Sigmoid colon (tissue), 7 donors: ENCODE measurements at regions of chr2 and their contacts with region 1.

Region 1: GRCh38 chr2:121530212-121530705 is 421 bp upstream of the RNU4ATAC start:
- DNase-seq: peak; percentile 90
- H3K4me3 ChIP-seq: peak overlapping the region; percentile 59 to 82 (median 73)
- H3K27ac ChIP-seq: peak overlapping the region; percentile 87 to 96 (median 94)
- H3K4me1 ChIP-seq: peaks cover 0 to 50% (median 33%) of the 10 kb centered on the region in 4 donors
- H3K27me3 ChIP-seq: no peaks in the 10 kb centered on the region
- CTCF ChIP-seq: no peak
- EP300 ChIP-seq: no peak
- POLR2A ChIP-seq: no peak

Region 2: GRCh38 chr2:121400201-121400600 is 130.1 kb before region 1 on chr2:
- intact Hi-C with region 1: loop called (anchors 10 kb)
- DNase-seq: no peak
- H3K4me3 ChIP-seq: no peak overlapping the region
- H3K27ac ChIP-seq: no peak overlapping the region
- H3K4me1 ChIP-seq: no peaks in the 10 kb centered on the region
- H3K27me3 ChIP-seq: no peaks in the 10 kb centered on the region
- CTCF ChIP-seq: no peak
- EP300 ChIP-seq: no peak
- POLR2A ChIP-seq: no peak

Region 3: GRCh38 chr2:121555008-121555407 is 24.7 kb after region 1 on chr2:
- intact Hi-C with region 1: no loop called
- DNase-seq: no peak
- H3K4me3 ChIP-seq: no peak overlapping the region
- H3K27ac ChIP-seq: no peak overlapping the region
- H3K4me1 ChIP-seq: peaks cover 0 to 9% (median 3%) of the 10 kb centered on the region in 4 donors
- H3K27me3 ChIP-seq: no peaks in the 10 kb centered on the region
- CTCF ChIP-seq: no peak
- EP300 ChIP-seq: no peak
- POLR2A ChIP-seq: no peak

Region 4: DNA sequence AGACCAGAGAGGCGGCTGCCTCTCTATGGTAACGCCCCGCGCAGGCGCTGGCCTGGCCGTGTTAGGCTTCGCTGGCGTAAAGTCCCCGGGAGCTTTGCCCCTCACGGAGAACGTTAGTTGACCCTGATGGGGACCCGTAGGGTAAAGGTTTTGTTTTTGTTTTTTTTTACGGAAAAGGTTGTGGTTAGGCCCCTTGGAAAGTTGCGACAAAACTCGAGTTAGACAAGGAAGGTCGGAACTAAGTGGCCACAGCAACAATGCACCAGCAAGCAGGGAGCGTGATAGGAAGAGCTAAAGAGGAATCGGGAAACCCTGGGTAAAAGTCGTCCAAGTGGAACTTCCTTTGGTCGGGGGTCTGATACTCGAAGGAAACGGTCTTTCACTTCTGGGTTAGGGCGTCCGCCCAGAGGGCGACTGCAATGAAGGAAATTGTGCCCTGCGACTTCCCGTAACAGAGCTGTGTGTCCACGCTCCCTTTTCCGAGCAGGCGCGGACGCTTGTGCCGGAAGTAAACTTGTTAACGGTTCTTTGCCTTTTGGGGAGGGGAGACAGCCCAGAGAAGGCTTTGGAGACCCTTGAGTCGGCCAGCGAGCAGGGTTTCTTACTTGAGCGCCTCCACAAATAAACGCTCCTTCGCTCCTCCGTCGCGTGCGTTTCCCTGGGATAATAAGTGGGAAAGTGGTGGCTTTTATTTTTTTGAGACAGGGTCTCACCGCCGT is 119.5 kb after region 1 on chr2:
- intact Hi-C with region 1: loop called (anchors 1 kb)
- DNase-seq: peak; percentile 99
- H3K4me3 ChIP-seq: peak overlapping the region; percentile 77 to 94 (median 85)
- H3K27ac ChIP-seq: peak overlapping the region; percentile 93 to 98 (median 96)
- H3K4me1 ChIP-seq: peaks cover 0 to 46% (median 30%) of the 10 kb centered on the region in 4 donors
- H3K27me3 ChIP-seq: no peaks in the 10 kb centered on the region
- CTCF ChIP-seq: no peak
- EP300 ChIP-seq: peak in 1 of 4 donors; percentile 48
- POLR2A ChIP-seq: peak in 1 of 2 donors; percentile 4

Region 5: DNA sequence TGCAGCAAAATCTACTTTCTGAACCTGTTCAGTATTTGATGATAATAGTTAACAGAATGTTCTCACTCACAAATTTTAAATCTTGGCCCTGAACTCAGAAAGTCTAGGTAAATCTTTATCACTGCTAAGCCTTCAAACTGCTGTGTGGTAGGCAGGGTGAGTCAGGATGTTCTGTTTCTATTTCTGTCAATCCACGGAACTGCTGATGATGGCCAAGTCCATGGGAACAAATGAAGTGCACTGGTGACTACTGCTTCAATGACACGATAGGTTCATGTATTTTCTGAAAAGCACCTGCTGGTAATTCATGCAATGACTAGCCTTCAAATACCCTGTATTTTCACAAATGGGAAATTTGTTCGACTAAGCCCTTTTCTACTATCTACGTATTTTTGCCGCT is 192.2 kb after region 1 on chr2:
- intact Hi-C with region 1: loop called (anchors 2 kb)
- DNase-seq: no peak
- H3K4me3 ChIP-seq: no peak overlapping the region
- H3K27ac ChIP-seq: no peak overlapping the region
- H3K4me1 ChIP-seq: no peaks in the 10 kb centered on the region
- H3K27me3 ChIP-seq: no peaks in the 10 kb centered on the region
- CTCF ChIP-seq: no peak
- EP300 ChIP-seq: no peak
- POLR2A ChIP-seq: no peak

Region 6: DNA sequence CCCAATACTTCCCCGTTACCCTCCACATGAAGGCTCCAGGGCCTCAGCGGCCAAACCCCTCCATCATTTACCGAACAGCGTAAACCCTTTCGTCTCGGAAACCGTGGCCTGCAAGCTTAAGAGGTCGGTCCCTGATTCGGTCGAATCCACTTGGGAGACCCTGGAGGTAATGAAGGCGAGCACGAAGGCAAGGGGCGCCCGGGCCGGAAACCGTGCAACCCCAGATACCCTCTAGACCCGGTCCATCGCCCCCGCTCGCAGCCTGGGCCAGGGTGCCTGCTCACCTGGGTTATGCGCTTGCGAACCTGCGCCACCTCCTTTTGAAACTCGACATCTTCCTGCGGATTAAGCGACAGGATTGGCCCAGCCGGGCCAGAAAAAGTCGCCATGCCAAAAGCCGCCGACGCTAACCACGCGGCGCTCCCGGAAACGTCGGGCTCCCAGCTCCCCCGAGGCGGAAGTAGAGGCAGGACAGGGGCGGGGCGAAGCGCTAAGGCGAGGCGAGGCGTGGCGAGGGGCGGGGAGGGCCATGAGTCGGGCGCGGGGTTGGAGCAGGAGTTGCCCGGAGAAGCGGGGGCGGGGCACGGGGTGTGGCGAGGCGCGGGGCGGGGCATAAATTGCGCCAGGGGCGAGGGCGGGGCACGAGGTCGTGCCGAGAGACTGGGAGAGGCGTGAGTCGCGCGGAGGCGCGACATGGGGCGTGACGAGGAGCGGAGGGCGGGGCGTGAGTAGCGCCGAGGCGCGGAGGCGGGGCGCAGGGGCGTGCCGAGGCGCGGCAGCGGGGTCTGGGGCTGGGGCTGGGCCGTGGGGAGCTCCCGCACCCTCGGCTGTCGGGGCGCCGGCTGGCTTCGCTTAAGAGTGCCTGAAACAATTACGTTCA is 206.4 kb after region 1 on chr2 and contains the start of gene NIFK:
- intact Hi-C with region 1: loop called (anchors 2 kb)
- DNase-seq: peak; percentile 99
- H3K4me3 ChIP-seq: peak within 1 kb of the TSS; percentile 77 to 98 (median 91)
- H3K27ac ChIP-seq: peak within 1 kb of the TSS; percentile 82 to 91 (median 86)
- H3K4me1 ChIP-seq: peaks cover 0 to 18% (median 13%) of the 10 kb centered on the region in 4 donors
- H3K27me3 ChIP-seq: no peaks in the 10 kb centered on the region
- CTCF ChIP-seq: no peak
- EP300 ChIP-seq: no peak
- POLR2A ChIP-seq: peak; percentile 21 to 37
- total RNA-seq, gene NIFK: 25.4 to 51.2 (median 32.1) TPM

Region 7: GRCh38 chr2:121755236-121756111 is 225.2 kb after region 1 on chr2 and contains the start of gene TSN:
- intact Hi-C with region 1: loop called (anchors 5 kb)
- DNase-seq: peak; percentile 98
- H3K4me3 ChIP-seq: peak within 1 kb of the TSS; percentile 72 to 95 (median 86)
- H3K27ac ChIP-seq: peak within 1 kb of the TSS; percentile 71 to 89 (median 82)
- H3K4me1 ChIP-seq: peaks cover 0 to 34% (median 28%) of the 10 kb centered on the region in 4 donors
- H3K27me3 ChIP-seq: no peaks in the 10 kb centered on the region
- CTCF ChIP-seq: no peak
- EP300 ChIP-seq: no peak
- POLR2A ChIP-seq: peak in 1 of 2 donors; percentile 42
- total RNA-seq, gene TSN: 24.8 to 51.5 (median 42.0) TPM